Activated CD4-positive, alpha-beta T cell treated with anti-CD3 and anti-CD28 coated beads, Interleukin-2, amount 10 ng/mL, durations not matched to agents 24 days and 14 days (primary cell): ENCODE measurements at regions of chr4 and their contacts with region 1.

Region 1: DNA sequence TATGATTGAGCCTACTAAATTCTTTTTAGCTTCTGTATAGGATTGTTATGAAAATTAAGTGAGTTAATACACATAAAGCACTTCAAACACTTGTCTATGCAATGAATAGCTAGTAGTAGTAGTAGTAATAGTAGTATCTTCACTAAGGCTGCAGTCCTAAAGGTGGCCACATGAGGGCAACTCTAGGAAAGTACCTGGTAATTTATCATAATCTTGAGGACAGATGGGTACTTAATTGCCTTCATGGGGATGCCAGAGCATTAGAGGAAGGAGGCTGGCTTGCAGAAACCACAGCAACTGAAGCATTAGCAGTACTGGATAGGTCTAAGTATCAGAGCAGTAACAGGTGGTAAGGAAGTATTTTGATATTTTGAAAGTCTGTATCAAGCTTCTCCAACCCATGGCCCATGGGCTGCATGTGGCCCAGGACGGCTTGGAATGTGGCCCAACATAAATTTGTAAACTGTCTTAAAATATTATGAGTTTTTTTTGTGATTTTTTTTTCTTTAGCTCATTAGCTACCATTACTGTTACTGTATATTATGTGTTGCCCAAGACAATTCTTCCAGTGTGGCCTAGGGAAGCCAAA is 17.3 kb downstream of the NIPAL1 start:
- DNase-seq: peak; percentile 87
- H3K4me3 Mint-ChIP-seq: no peak overlapping the region
- H3K27ac Mint-ChIP-seq: no peak overlapping the region
- H3K4me1 Mint-ChIP-seq: peaks cover 24% of the 10 kb centered on the region
- H3K27me3 Mint-ChIP-seq: peaks cover 2% of the 10 kb centered on the region

Region 2: GRCh38 chr4:47463235-47463956 is 570.5 kb before region 1 on chr4 and contains the start of gene COMMD8:
- intact Hi-C with region 1: loop called (anchors 10 kb)
- DNase-seq: peak; percentile 99
- H3K4me3 Mint-ChIP-seq: peak within 1 kb of the TSS; percentile 88
- H3K27ac Mint-ChIP-seq: peak within 1 kb of the TSS; percentile 77
- H3K4me1 Mint-ChIP-seq: peaks cover 22% of the 10 kb centered on the region
- H3K27me3 Mint-ChIP-seq: no peaks in the 10 kb centered on the region
- total RNA-seq, gene COMMD8: 17.6 and 17.8 TPM in 2 replicates

Region 3: GRCh38 chr4:48016141-48017103 is 17.5 kb before region 1 on chr4 and contains the starts of genes CNGA1 and NIPAL1:
- intact Hi-C with region 1: loop called (anchors 1 kb)
- DNase-seq: peak; percentile 91
- H3K4me3 Mint-ChIP-seq: peak within 1 kb of the TSS; percentile 80
- H3K27ac Mint-ChIP-seq: peak within 1 kb of the TSS; percentile 45
- H3K4me1 Mint-ChIP-seq: peaks cover 20% of the 10 kb centered on the region
- H3K27me3 Mint-ChIP-seq: peaks cover 30% of the 10 kb centered on the region
- total RNA-seq, gene CNGA1: not detected in 2 replicates
- total RNA-seq, gene NIPAL1: 3.6 and 3.8 TPM in 2 replicates

Region 4: DNA sequence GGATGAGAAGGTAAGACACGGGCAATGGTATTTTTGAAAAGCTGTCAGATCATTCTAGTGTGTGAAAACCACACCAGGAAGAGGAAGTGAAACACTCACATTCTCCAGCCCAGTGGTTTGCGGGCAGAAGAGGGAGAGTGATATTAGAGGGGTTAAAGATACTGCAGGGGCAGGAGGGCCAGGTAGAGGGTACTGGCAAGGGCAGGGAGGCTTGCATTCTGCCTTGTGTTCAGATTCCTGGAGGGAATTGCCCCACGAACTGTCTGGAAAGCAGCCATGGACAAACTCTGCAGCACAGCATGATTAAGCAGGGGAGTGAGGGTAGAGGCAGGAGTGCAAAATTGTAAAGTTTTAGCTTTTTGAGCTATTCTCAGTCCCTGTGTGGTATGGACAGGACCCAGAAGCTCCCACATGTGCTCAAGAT is 13.5 kb after region 1 on chr4:
- intact Hi-C with region 1: loop called (anchors 1 kb)
- DNase-seq: peak; percentile 89
- H3K4me3 Mint-ChIP-seq: peak overlapping the region; percentile 38
- H3K27ac Mint-ChIP-seq: peak overlapping the region; percentile 61
- H3K4me1 Mint-ChIP-seq: peaks cover 39% of the 10 kb centered on the region
- H3K27me3 Mint-ChIP-seq: peaks cover 62% of the 10 kb centered on the region

Region 5: DNA sequence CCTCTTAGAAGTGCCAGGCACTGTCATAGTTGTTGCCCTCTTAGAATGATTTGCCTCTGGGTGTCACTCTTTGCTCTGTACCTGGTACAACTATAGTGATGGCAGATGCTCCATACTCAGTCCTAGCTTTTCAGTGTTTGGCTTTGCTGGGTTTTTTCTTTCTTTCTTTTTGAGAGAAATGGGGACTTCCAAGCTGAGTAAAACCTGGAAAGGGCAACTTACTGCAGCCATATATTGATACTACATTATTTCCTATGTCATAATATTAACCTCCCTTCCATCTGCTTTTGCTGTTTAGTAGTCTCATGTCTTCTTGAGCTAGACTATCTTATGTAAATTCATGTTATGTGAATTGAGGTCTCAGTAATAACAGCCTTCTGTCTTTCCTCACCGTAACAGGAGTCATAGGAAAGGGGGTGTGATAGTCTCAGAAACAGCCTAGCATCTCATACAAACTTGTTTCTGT is 31.7 kb after region 1 on chr4:
- intact Hi-C with region 1: loop called (anchors 5 kb)
- DNase-seq: no peak
- H3K4me3 Mint-ChIP-seq: no peak overlapping the region
- H3K27ac Mint-ChIP-seq: peak overlapping the region; percentile 43
- H3K4me1 Mint-ChIP-seq: peaks cover 15% of the 10 kb centered on the region
- H3K27me3 Mint-ChIP-seq: no peaks in the 10 kb centered on the region

Region 6: GRCh38 chr4:48103483-48104139 is 69.7 kb after region 1 on chr4:
- intact Hi-C with region 1: loop called (anchors 1 kb)
- DNase-seq: peak; percentile 51
- H3K4me3 Mint-ChIP-seq: no peak overlapping the region
- H3K27ac Mint-ChIP-seq: peak overlapping the region; percentile 63
- H3K4me1 Mint-ChIP-seq: peaks cover 16% of the 10 kb centered on the region
- H3K27me3 Mint-ChIP-seq: no peaks in the 10 kb centered on the region

Region 7: GRCh38 chr4:48490012-48490679 is 456.2 kb after region 1 on chr4 and contains the start of gene ZAR1:
- intact Hi-C with region 1: loop called (anchors 10 kb)
- DNase-seq: no peak
- H3K4me3 Mint-ChIP-seq: peak within 1 kb of the TSS; percentile 60
- H3K27ac Mint-ChIP-seq: no peak within 1 kb of the TSS
- H3K4me1 Mint-ChIP-seq: no peaks in the 10 kb centered on the region
- H3K27me3 Mint-ChIP-seq: peaks cover 55% of the 10 kb centered on the region
- total RNA-seq, gene ZAR1: not detected in 2 replicates